BJ (cell line): ENCODE measurements at regions of chr16 and their contacts with region 1.

Region 1: DNA sequence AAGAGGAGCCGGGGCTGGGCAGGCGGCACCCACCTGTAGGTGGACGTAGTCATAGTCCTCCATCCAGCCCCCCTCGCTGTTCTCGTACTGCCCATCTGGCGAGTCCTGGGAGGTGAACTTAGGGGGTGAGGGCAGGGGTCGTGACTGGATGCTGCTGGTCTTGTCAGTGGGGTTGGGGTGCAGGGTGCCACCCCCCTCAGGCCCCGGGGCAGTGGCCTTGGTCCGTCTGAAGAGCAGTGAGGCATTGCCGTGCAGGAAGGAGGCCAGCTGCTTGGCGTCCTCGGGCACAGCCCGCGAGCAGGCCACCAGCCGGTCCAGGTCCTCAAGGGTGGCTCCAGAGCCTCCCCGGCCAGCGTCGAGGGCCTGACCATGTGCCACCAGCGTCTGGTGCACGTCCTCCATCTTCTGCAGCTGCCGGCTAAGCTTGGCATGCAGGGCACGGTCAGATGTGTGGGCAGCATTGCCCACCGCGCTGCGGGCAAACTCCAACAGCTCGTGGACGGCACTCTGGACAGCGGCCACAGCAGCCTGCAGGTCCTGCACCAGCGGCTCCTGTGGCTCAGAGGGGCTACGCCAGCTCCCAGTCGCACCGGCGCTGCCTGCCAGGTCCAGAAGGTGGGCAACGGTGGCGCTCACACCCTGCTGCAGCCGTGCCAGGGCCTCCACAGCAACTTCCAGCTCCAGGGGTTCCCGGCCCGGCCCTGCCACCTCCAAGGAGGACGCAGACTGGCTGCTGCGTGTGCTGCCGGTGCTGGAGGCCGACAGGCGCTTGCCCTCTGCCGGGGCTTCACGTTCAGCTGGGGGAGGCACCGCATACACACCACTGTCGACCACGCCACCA is 16.3 kb downstream of the CTRB1 start:
- DNase-seq: no peak
- H3K4me3 ChIP-seq: no peak overlapping the region
- H3K27me3 ChIP-seq: no peaks in the 10 kb centered on the region
- CTCF ChIP-seq: no peak

Region 2: DNA sequence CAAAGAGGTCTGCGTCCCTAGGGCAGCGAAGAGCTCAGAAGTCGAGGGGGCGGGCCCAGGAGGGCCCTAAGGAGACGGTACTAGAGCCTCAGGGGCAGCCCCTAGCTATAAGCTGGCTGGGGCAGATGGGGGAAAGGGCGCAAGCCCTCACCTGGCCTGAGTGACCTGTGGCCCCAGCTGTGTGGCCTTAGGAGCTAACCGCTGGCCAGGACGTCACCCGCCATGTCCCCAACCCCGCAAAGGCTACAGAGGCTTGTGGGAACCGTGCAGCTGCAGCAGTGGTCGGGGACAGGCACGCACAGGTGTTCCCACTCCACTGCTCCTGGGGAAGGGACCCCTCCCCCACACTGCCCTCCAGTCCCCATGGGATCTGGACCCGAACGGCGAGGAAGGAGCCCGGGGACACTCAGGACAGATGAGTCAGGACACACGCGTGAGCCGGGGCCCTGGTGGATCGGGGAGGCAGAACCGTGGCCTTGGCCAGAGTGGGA is 26.1 kb before region 1 on chr16:
- CTCF ChIA-PET with region 1: interaction called, 11 read pairs
- POLR2A ChIA-PET with region 1: no interaction called
- DNase-seq: no peak
- H3K4me3 ChIP-seq: no peak overlapping the region
- H3K27me3 ChIP-seq: no peaks in the 10 kb centered on the region
- CTCF ChIP-seq: no peak

Region 3: DNA sequence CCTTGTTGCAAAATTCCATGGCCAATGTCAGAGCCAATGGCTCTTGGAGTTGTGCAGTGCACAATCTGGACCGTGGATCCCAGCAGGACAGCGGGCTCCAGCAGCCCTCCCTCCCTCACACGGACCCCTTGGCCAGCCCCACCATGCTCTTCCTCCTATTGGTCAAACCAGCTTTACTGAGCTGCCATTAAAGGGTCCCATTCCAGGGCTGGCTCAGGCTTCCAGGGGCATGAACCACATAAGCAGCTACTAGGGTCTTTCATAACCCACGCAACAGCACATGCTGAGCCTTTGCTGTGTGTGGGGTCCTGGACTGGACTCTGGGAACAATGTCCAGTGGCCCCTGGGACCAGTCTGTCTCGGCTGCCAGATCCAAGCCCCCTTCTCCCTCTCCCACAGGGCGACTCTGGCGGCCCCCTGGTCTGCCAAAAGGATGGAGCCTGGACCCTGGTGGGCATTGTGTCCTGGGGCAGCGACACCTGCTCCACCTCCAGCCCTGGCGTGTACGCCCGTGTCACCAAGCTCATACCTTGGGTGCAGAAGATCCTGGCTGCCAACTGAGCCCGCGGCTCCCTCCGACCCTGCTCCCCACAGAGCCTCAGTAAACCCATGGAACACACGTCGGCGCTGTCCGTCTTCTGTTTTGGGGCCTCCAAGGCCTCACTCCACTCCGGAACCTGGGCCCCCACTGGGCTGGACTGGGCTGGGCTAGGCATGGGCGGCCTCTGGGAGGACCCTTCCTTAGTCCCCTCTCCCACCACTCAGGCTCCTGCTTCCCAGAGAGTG is 10.6 kb before region 1 on chr16:
- CTCF ChIA-PET with region 1: no interaction called
- POLR2A ChIA-PET with region 1: no interaction called
- DNase-seq: no peak
- H3K4me3 ChIP-seq: no peak overlapping the region
- H3K27me3 ChIP-seq: no peaks in the 10 kb centered on the region
- CTCF ChIP-seq: no peak

Region 4: GRCh38 chr16:75264996-75265844 is 30.1 kb after region 1 on chr16:
- CTCF ChIA-PET with region 1: interaction called, 11 read pairs
- POLR2A ChIA-PET with region 1: no interaction called
- DNase-seq: no peak
- H3K4me3 ChIP-seq: peak overlapping the region; percentile 98
- H3K27me3 ChIP-seq: no peaks in the 10 kb centered on the region
- CTCF ChIP-seq: no peak

Region 5: DNA sequence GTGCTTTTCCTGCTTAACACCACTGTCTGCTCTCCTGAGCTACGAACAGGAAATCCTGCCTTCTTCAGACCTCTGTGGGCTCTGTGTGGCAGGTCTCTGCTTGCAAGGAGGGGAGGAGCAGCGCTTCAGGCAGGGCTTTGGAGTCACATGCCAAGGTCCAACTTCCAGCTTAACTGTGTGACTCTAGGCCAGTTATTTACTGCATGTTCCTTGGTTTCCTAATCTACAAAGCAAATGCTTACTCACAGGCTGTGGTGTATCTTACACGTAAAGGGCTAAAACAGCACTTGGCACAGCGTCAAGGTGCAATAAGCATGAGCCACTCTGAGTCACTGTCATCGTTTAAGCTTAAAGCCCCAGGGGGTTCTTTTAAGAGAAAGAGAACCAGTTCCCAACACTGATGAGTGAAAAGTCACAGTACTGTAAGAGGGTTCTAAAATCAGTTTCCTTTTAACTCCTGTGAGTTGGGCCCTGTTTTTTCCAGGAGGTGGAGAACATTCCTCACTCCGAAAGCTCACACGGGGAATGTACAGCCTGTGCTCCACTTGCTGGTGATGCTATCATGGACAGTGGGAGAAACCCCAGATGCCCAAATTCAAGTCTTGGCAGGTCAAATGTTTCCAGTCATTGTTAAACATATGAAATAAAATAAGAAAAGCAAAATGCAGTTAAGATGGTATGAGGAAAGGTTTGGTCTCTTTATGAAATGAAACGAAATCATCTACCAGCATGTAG is 70.5 kb after region 1 on chr16:
- CTCF ChIA-PET with region 1: interaction called, 14 read pairs
- POLR2A ChIA-PET with region 1: no interaction called
- DNase-seq: peak; percentile 100
- H3K4me3 ChIP-seq: no peak overlapping the region
- H3K27me3 ChIP-seq: no peaks in the 10 kb centered on the region
- CTCF ChIP-seq: no peak

Region 6: GRCh38 chr16:75372236-75372856 is 137.3 kb after region 1 on chr16:
- CTCF ChIA-PET with region 1: interaction called, 21 read pairs
- POLR2A ChIA-PET with region 1: no interaction called
- DNase-seq: no peak
- H3K4me3 ChIP-seq: no peak overlapping the region
- H3K27me3 ChIP-seq: no peaks in the 10 kb centered on the region
- CTCF ChIP-seq: no peak

Region 7: DNA sequence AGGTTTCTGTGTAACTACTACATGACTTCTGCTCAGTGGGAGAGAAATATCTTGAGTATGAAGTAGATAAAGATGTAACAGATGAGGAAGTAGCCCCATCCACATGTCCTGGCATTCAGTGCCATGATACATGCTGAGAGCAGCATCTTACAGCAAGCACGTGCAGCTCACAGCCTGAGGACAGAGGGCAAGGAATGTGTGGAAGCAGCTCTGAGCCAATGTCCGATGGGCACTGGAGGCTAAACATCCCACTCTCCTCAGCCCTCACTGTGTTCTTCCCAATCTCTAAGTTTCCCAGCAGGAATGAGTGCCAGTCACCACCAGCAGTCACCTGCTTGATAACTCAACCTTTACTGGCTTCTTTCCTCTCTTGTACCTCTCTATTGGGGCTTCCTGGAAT is 157.8 kb after region 1 on chr16:
- CTCF ChIA-PET with region 1: interaction called, 40 read pairs
- POLR2A ChIA-PET with region 1: no interaction called
- DNase-seq: no peak
- H3K4me3 ChIP-seq: no peak overlapping the region
- H3K27me3 ChIP-seq: no peaks in the 10 kb centered on the region
- CTCF ChIP-seq: no peak